AG04449 (cell line): ENCODE measurements at regions of chr1 and their contacts with region 1.

Region 1: GRCh38 chr1:116485071-116485735 is 85.6 kb downstream of the CD58 start:
- DNase-seq: no peak
- H3K4me3 ChIP-seq: no peak overlapping the region
- CTCF ChIP-seq: peak; percentile 92

Region 2: DNA sequence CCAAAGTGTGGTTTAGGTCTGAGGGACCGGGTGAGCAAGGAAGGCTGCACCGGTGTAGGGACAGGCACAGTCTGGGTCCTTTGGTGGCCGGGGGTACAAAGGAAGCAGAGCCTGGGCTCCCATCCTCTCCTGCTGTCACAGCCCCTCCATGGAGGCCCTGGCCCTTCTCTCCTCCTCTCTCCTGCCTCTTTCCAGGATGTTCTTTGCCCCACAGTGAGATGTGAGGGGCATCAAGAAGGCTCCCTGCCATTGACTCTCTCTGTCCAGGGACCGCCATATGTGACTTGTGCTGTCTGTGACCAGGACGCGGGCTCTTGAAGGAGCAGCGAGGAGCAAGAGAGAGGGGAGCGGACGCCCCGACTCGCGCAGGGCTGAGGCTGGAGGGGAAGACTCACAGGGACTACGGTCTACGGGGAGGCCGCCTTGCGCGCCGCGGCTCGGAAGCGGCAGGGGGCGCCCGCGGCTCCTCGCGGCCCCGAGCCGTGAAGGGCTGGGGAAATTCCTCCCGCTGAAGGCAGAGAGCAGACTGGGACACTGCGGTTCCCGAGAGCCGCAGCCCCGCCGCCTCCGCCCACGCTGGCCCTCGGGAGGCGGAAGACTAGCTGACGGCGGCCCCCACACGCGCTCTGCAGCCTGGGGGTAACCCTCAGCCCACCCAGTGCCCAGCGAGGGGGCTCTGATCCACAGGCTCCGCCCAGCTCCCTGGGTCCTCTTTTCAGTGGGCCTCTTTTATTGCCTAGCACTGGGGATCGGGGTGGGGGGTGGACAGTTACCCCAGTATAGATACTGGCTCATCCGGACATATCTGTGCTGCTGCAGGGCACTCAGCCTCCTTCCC is 333.2 kb before region 1 on chr1:
- CTCF ChIA-PET with region 1: interaction called, 1,029 read pairs
- POLR2A ChIA-PET with region 1: no interaction called
- DNase-seq: no peak
- H3K4me3 ChIP-seq: peak overlapping the region; percentile 57
- CTCF ChIP-seq: peak; percentile 84

Region 3: GRCh38 chr1:116273042-116273783 is 212.0 kb before region 1 on chr1:
- CTCF ChIA-PET with region 1: no interaction called
- POLR2A ChIA-PET with region 1: no interaction called
- DNase-seq: no peak
- H3K4me3 ChIP-seq: no peak overlapping the region
- CTCF ChIP-seq: no peak

Region 4: GRCh38 chr1:116353155-116353554 is 132.0 kb before region 1 on chr1:
- CTCF ChIA-PET with region 1: interaction called, 44 read pairs
- POLR2A ChIA-PET with region 1: no interaction called
- DNase-seq: no peak
- H3K4me3 ChIP-seq: no peak overlapping the region
- CTCF ChIP-seq: no peak

Region 5: GRCh38 chr1:116377541-116378529 is 107.4 kb before region 1 on chr1:
- CTCF ChIA-PET with region 1: interaction called, 21 read pairs
- POLR2A ChIA-PET with region 1: interaction called, 3 read pairs
- DNase-seq: peak; percentile 93
- H3K4me3 ChIP-seq: peak overlapping the region; percentile 31
- CTCF ChIP-seq: no peak

Region 6: DNA sequence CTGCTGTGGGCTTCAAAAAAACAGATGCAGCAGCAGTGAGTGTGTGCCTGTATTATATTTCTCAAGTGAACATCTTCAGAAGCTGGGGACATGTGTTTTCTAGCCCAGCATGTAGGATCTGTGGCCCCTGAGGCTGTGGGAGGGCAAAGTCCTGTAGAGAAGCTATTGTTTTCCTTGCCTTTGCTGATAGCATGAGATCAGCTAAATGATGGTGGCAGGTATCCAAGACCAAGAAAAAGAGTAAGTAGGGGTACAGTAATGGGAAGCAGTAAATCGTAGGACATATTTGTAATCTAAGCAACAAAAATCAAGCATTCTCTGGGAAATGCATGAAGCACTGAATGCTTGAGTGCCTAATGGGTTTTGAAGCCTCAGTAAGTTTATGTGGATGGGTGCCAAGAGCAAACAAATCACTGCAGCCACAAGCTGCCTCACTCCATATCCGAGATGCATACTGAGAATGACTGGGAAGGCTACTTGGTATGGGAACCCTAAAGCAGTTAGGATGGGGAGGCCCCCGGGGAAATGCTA is 12.7 kb before region 1 on chr1:
- CTCF ChIA-PET with region 1: interaction called, 59 read pairs
- POLR2A ChIA-PET with region 1: no interaction called
- DNase-seq: no peak
- H3K4me3 ChIP-seq: no peak overlapping the region
- CTCF ChIP-seq: no peak

Region 7: DNA sequence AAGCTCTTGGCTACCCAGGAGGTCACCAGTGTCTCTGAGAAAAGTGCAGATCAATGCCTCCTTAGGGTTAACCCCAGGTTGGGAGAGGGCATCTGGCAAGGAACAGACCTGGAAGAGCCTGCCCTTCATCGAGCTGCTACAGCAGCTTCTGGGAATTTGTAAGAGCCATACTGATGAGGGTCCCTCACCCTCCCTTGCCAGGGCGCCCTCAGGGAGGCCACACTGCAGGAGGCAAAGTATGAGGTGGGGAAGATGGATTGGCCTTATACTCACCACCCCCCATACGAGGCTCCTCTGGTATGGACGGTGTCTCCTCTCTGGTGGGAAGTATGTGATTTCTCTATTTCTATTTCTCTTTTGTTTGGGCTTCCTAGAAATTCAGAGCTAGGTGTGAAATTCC is 169.2 kb after region 1 on chr1:
- CTCF ChIA-PET with region 1: no interaction called
- POLR2A ChIA-PET with region 1: no interaction called
- DNase-seq: no peak
- H3K4me3 ChIP-seq: no peak overlapping the region
- CTCF ChIP-seq: no peak

Region 8: DNA sequence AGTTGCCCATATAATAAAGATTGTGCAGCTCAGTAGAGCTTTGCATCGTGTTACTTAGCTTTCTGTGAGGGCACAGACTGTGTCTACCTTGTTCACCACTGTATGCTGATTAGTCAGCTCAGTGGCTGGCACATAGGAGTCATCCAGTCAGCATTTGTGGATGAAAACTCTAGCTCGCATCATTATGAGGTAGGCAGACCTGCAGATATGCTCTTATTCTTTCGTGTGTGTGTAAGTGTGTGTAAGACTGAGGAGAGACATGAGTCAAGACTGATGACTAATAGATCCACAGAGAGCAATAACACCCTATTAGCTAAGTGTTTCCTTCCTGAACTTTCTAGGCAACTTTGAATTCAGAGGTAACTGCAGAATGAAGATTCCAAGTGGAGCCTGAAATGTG is 592.1 kb after region 1 on chr1:
- CTCF ChIA-PET with region 1: no interaction called
- POLR2A ChIA-PET with region 1: no interaction called
- DNase-seq: peak; percentile 82
- H3K4me3 ChIP-seq: no peak overlapping the region
- CTCF ChIP-seq: no peak